Activated B cell treated with CpG ODN at 0.5 μM for 24 hours (primary cell): ENCODE measurements at regions of chr17 and their contacts with region 1.

Region 1: GRCh38 chr17:2786176-2786881 is 9.9 kb upstream of the RAP1GAP2 start:
- DNase-seq: peak; percentile 88
- ATAC-seq: peak; percentile 98
- H3K4me3 Mint-ChIP-seq: no peak overlapping the region
- H3K27ac Mint-ChIP-seq: no peak overlapping the region
- H3K4me1 Mint-ChIP-seq: peaks cover 25% of the 10 kb centered on the region
- H3K27me3 Mint-ChIP-seq: no peaks in the 10 kb centered on the region
- CTCF ChIP-seq: peak; percentile 38

Region 2: DNA sequence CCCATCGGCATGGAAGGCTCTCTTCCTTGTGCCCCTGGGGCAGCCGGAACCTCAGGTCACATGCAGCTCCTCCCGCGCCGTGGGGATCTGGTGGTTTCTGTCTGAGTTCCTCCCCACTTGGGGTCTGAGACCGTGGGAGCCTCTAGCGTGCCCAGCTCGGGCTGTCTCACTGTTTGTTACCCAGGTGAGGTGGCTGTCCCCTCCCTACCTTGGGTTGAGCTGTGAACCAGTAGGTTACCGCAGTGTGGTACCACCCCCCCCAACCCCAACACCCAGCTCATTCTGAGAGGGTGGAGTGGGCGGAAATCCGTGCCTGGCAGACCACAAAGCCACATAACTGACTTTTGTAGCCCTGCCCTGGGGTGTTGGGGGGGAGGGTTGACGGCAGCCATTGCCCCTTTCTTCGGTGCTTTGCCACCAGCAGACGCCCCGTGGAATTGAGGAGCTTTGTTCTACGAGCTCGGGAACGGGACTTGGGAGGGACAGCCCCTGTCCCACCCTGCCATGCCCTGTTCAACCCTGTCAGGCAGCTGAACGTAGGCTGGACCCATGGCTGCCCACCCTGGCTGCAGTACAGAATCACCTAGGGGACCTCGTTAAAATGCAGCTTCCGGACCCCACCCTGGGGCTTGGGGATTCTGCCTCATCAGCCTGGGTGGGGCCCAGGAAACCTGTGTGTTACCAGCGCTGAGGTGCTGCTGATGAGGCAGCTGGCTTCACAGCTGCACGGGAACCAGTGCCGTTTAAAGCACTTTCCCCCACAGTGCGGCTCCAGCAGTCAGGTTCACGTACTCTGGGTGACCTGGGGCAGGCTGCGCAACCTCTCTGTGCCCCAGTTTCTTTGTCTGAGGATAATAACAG is 28.4 kb after region 1 on chr17:
- CTCF ChIA-PET with region 1: interaction called, 21 read pairs
- POLR2A ChIA-PET with region 1: interaction called, 51 read pairs
- intact Hi-C with region 1: no loop called
- DNase-seq: peak; percentile 67
- ATAC-seq: peak; percentile 84
- H3K4me3 Mint-ChIP-seq: peak overlapping the region; percentile 64
- H3K27ac Mint-ChIP-seq: peak overlapping the region; percentile 73
- H3K4me1 Mint-ChIP-seq: peaks cover 46% of the 10 kb centered on the region
- H3K27me3 Mint-ChIP-seq: no peaks in the 10 kb centered on the region
- CTCF ChIP-seq: no peak

Region 3: DNA sequence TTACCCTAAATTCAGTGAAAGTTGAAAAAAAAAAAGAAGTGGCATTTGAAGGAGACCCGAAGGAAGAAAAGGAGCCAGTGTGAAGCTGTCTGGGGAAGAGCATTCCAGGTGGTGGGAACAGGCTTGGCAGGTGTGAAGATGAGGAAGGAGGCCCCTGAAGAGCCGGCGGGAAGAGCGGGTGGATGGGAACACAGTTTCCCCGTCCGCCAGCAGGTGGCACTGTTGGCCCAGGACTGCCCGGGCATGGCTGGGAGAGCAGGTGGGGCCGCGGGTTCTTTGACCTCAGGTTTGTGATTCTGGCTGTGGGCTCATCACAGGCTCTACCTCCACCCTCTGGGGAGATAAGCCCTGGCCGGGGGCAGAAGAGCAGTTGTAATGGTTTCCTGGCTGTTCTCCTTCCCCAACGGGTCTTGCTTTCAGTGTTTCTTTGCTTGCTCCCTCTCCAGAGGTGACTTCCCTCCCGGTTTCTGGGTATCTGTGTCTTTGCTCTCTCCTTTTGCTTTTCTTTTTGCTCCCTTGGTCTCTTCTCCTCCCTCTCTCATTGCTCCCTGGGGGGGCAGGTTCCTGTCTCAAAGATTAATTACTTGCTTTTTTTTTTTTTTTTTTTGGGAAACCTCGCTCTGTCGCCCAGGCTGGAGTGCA is 42.2 kb after region 1 on chr17:
- CTCF ChIA-PET with region 1: interaction called, 13 read pairs
- POLR2A ChIA-PET with region 1: interaction called, 3 read pairs
- intact Hi-C with region 1: loop called (anchors 2 kb)
- DNase-seq: peak; percentile 84
- ATAC-seq: peak; percentile 84
- H3K4me3 Mint-ChIP-seq: no peak overlapping the region
- H3K27ac Mint-ChIP-seq: no peak overlapping the region
- H3K4me1 Mint-ChIP-seq: peaks cover 42% of the 10 kb centered on the region
- H3K27me3 Mint-ChIP-seq: peaks cover 2% of the 10 kb centered on the region
- CTCF ChIP-seq: peak; percentile 97

Region 4: GRCh38 chr17:2837147-2837561 is 50.8 kb after region 1 on chr17:
- CTCF ChIA-PET with region 1: interaction called, 16 read pairs
- POLR2A ChIA-PET with region 1: interaction called, 7 read pairs
- intact Hi-C with region 1: loop called (anchors 1 kb)
- DNase-seq: peak; percentile 63
- ATAC-seq: peak; percentile 100
- H3K4me3 Mint-ChIP-seq: no peak overlapping the region
- H3K27ac Mint-ChIP-seq: no peak overlapping the region
- H3K4me1 Mint-ChIP-seq: peaks cover 9% of the 10 kb centered on the region
- H3K27me3 Mint-ChIP-seq: peaks cover 11% of the 10 kb centered on the region
- CTCF ChIP-seq: no peak

Region 5: GRCh38 chr17:2847381-2848333 is 61.3 kb after region 1 on chr17:
- CTCF ChIA-PET with region 1: interaction called, 10 read pairs
- POLR2A ChIA-PET with region 1: no interaction called
- intact Hi-C with region 1: no loop called
- DNase-seq: no peak
- ATAC-seq: no peak
- H3K4me3 Mint-ChIP-seq: no peak overlapping the region
- H3K27ac Mint-ChIP-seq: no peak overlapping the region
- H3K4me1 Mint-ChIP-seq: peaks cover 15% of the 10 kb centered on the region
- H3K27me3 Mint-ChIP-seq: peaks cover 31% of the 10 kb centered on the region
- CTCF ChIP-seq: no peak

Region 6: DNA sequence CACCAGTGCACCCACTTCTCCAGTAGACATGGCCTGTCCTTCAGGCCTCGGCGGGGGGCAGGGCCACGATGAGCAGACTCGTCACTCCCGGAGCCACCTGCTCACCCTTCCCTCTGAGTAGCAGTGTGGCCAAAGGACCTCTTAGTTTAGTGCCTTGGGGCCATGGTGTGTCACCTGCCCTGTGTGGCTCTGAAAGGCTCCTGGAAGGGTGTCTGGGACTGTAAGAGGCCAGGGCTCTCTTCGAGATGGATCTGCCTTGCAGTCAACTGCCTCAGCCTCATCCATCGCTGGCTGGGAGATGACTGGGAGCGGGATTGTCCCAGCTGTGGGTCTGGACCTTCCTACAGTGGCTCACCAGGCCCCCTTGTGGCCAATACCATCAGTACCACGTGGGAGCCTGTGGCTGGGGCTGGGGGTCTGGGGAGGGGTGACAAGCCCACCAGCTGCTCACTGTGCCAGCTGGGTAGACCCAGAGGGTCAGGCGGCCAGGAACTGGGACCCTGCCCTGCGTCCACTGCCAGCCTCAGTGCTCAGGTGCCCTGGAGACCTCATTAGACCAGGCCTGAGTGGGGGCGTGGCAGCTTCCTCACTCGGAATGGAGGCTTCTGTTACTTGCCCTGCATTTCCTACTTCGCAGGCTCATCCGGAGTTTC is 143.7 kb after region 1 on chr17:
- CTCF ChIA-PET with region 1: interaction called, 7 read pairs
- POLR2A ChIA-PET with region 1: interaction called, 9 read pairs
- intact Hi-C with region 1: loop called (anchors 1 kb)
- DNase-seq: peak; percentile 36
- ATAC-seq: peak; percentile 54
- H3K4me3 Mint-ChIP-seq: no peak overlapping the region
- H3K27ac Mint-ChIP-seq: no peak overlapping the region
- H3K4me1 Mint-ChIP-seq: peaks cover 25% of the 10 kb centered on the region
- H3K27me3 Mint-ChIP-seq: no peaks in the 10 kb centered on the region
- CTCF ChIP-seq: no peak